GM10248 (cell line): ENCODE measurements at regions of chr5 and their contacts with region 1.

Region 1: DNA sequence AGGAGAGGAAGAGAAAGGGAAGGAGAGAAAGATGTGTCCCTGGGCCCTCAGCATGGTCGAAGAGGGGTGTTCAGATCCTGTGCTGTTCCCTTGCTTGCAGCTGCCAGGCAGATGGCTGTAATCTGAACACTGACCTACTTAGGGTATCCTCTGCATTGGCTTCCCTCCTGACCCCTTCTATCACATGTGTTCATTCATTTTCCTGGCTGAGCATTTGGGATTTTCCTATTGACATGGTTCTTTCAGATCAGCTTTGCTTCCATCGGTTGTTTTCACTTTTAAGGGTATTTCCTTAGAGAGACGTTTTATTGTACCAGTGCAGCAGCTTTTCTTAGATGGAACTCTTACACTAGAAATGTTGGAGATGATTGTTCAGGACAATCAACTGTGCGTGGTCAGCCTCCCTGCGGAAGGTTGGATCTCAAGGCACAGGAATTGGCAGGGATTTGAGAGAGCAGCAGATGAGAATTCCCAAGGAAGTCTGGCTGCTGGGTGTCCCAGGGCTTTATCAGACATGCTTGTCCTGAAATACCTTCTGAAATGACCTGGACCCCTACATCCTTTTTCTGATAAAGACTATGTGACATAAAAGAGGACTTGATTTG is 26.0 kb downstream of the ACTBL2 start:
- DNase-seq: no peak
- CTCF ChIP-seq: no peak

Region 2: GRCh38 chr5:57402348-57402747 is 54.3 kb before region 1 on chr5:
- CTCF ChIA-PET with region 1: no interaction called
- POLR2A ChIA-PET with region 1: no interaction called
- DNase-seq: no peak
- CTCF ChIP-seq: no peak

Region 3: DNA sequence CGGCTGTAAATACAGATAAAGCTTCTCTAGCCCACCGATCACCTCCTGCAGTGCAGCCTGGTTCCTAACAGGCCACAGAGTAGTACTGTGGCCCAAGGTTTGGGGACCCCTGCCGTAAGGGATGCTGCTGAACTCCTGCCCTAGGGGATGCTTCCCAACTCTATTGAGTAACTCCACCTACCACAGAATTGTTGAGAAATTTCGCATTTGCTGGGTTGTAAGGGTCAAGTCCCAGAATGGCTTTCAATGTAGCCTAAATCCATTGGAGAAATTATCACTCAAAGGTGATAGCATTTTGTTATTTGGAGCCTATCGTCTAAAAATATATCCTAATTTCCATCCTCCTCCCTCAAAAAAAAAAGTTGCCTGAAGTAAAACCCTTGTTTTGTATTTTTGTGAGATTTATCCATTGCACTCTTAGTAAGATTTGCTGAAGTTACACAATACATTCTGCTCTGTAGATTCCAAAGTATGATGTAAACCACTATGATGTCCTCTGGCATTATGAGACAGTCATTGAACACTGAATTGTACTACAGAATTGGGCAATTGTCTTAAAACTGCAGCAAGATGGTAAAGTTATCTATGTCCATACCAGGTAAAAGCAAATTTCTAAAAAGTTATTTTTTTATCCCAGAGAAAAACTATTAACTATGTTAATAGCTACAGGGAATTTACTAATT is 12.0 kb after region 1 on chr5:
- CTCF ChIA-PET with region 1: interaction called, 11 read pairs
- POLR2A ChIA-PET with region 1: no interaction called
- DNase-seq: no peak
- CTCF ChIP-seq: no peak

Region 4: GRCh38 chr5:57613726-57614125 is 157.1 kb after region 1 on chr5:
- CTCF ChIA-PET with region 1: no interaction called
- POLR2A ChIA-PET with region 1: no interaction called
- DNase-seq: no peak
- CTCF ChIP-seq: no peak